CD14-positive monocyte (primary cell): ENCODE measurements at regions of chr15 and their contacts with region 1.

Region 1: GRCh38 chr15:34065941-34066340 is 26.9 kb upstream of the AVEN start:
- DNase-seq: no peak
- H3K4me3 ChIP-seq: no peak overlapping the region
- H3K4me3 Mint-ChIP-seq: no peak overlapping the region
- H3K27ac ChIP-seq: no peak overlapping the region
- H3K27ac Mint-ChIP-seq: no peak overlapping the region
- H3K4me1 ChIP-seq: no peaks in the 10 kb centered on the region
- H3K4me1 Mint-ChIP-seq: peaks cover 3% of the 10 kb centered on the region
- H3K27me3 ChIP-seq: no peaks in the 10 kb centered on the region
- H3K27me3 Mint-ChIP-seq: peaks cover 0 to 4% (median 0%) of the 10 kb centered on the region in 3 donors
- CTCF ChIP-seq: no peak

Region 2: DNA sequence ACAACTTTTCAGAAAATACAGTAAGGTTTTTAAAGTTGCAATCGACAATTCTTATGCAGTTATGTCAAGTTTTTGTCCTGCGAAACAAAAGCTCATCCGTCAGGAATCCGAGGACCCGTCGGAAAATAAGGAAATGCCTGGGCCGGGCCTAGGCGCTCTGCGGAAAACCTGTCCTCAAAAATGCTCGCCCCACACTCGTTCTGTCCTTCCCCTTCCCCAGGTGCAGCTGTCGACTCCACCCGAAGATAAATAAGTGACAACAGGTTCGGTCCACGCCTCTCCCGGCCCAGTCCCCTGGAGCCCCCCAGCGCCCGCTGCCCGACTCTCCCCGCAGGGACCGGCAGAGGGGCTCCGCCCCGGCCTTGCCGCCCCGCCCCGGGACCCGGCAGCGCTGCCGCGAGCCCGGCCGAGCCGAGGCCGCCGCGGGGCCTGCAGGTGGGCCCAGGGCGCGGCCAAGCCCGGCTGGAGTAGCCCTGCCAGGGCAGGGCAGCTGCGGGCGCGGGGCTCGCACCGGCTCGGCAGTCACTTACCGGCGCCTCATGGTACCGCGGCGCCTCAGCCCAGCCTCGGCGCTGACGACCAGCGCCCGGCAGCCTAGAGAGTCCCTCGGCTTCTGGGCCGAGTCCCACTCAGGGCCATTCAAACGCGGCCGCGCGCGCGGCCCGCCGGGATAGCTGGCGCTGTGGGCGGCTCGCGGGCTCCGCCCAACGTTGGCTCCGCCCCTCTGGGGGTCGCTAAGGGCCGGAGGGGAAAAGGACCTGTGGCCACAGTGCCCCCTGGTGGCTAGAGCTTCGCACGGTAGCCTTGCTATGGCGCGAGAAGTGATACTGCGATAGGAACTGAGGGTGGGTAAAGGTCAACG is 143.7 kb after region 1 on chr15 and contains the start of gene KATNBL1:
- intact Hi-C with region 1: loop called in 1 of 2 experiments (anchors 5 kb)
- DNase-seq: peak; percentile 91 to 96 (median 93)
- H3K4me3 ChIP-seq: peak within 1 kb of the TSS; percentile 67 to 96 (median 84)
- H3K4me3 Mint-ChIP-seq: peak within 1 kb of the TSS; percentile 88 to 93
- H3K27ac ChIP-seq: peak within 1 kb of the TSS; percentile 57 to 78
- H3K27ac Mint-ChIP-seq: peak within 1 kb of the TSS; percentile 76 to 92 (median 87)
- H3K4me1 ChIP-seq: peaks cover 6 to 10% of the 10 kb centered on the region in 2 donors
- H3K4me1 Mint-ChIP-seq: peaks cover 13% of the 10 kb centered on the region
- H3K27me3 ChIP-seq: no peaks in the 10 kb centered on the region
- H3K27me3 Mint-ChIP-seq: peaks cover 0 to 4% (median 0%) of the 10 kb centered on the region in 3 donors
- CTCF ChIP-seq: peak; percentile 80
- polyA plus RNA-seq, gene KATNBL1: 16.5 to 38.4 (median 37.7) TPM

Region 3: DNA sequence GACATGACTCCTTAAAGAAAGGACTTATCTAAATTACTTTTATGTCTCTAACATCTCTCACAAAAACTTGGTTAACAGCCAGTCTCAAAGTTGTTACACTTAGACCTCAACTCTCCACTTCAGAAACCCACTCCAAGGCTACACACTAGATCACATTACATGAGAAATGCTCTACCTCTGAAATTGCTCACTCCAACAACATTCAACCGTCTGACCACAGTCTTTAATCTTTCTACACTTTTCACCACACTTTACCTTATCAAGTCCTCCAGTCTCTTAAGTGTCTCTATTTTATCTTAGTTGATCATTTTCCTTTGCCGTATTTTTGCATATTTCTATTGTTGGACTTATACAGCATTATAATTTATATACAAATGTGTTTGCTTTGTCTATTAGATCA is 265.9 kb after region 1 on chr15:
- intact Hi-C with region 1: no loop called
- DNase-seq: no peak
- H3K4me3 ChIP-seq: no peak overlapping the region
- H3K4me3 Mint-ChIP-seq: no peak overlapping the region
- H3K27ac ChIP-seq: peak overlapping the region in 1 of 2 donors; percentile 32
- H3K27ac Mint-ChIP-seq: peak overlapping the region in 6 of 7 donors; percentile 0 to 79 (median 53)
- H3K4me1 ChIP-seq: peaks cover 41 to 50% of the 10 kb centered on the region in 2 donors
- H3K4me1 Mint-ChIP-seq: peaks cover 52% of the 10 kb centered on the region
- H3K27me3 ChIP-seq: no peaks in the 10 kb centered on the region
- H3K27me3 Mint-ChIP-seq: peaks cover 0 to 2% (median 0%) of the 10 kb centered on the region in 3 donors
- CTCF ChIP-seq: no peak

Region 4: GRCh38 chr15:34587717-34588674 is 522.1 kb after region 1 on chr15:
- intact Hi-C with region 1: loop called in 1 of 2 experiments (anchors 10 kb)
- DNase-seq: peak in 2 of 3 donors; percentile 34 to 48
- H3K4me3 ChIP-seq: peak overlapping the region in 1 of 3 experiments; percentile 49
- H3K4me3 Mint-ChIP-seq: peak overlapping the region; percentile 50 to 82
- H3K27ac ChIP-seq: no peak overlapping the region
- H3K27ac Mint-ChIP-seq: peak overlapping the region in 2 of 7 donors; percentile 45 to 57
- H3K4me1 ChIP-seq: peaks cover 8 to 12% of the 10 kb centered on the region in 2 donors
- H3K4me1 Mint-ChIP-seq: peaks cover 8% of the 10 kb centered on the region
- H3K27me3 ChIP-seq: peaks cover 15 to 21% of the 10 kb centered on the region in 2 donors
- H3K27me3 Mint-ChIP-seq: peaks cover 21 to 30% (median 26%) of the 10 kb centered on the region in 3 donors
- CTCF ChIP-seq: peak; percentile 78

Region 5: DNA sequence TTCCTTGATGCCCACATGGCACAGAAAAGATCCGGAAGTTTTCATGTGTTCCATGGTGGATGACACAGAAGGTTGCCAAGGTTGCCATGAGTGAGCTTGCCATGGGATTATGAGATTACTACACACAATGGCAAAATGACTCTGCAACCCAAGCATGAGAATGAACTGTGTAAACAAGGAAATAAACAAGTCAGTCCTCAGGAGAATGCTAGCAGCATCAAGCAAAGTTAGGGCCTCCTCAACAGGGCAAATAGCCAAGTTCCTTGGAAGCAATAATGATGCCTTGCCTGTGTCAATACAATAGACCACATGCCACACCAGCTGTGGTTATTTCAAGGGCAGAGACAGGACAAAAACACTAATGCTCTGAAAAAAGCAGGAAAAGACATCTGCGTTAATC is 861.8 kb after region 1 on chr15:
- intact Hi-C with region 1: loop called in 1 of 2 experiments (anchors 5 kb)
- DNase-seq: no peak
- H3K4me3 ChIP-seq: no peak overlapping the region
- H3K4me3 Mint-ChIP-seq: no peak overlapping the region
- H3K27ac ChIP-seq: peak overlapping the region in 1 of 2 donors; percentile 1
- H3K27ac Mint-ChIP-seq: no peak overlapping the region
- H3K4me1 ChIP-seq: no peaks in the 10 kb centered on the region
- H3K4me1 Mint-ChIP-seq: no peaks in the 10 kb centered on the region
- H3K27me3 ChIP-seq: no peaks in the 10 kb centered on the region
- H3K27me3 Mint-ChIP-seq: no peaks in the 10 kb centered on the region
- CTCF ChIP-seq: no peak